ENCODE measurements at regions of chr17 and their contacts with region 1.

Region 1: GRCh38 chr17:12415031-12415430 is 250.7 kb upstream of the MYOCD start:
- DNase-seq: no peak
- H3K4me3 ChIP-seq: no peak overlapping the region
- H3K27ac ChIP-seq: peak overlapping the region; percentile 69 to 86 (median 82)
- H3K4me1 ChIP-seq: peaks cover 0 to 68% (median 27%) of the 10 kb centered on the region in 4 donors
- H3K27me3 ChIP-seq: no peaks in the 10 kb centered on the region
- CTCF ChIP-seq: no peak
- EP300 ChIP-seq: peak in 1 of 4 donors; percentile 36
- POLR2A ChIP-seq: no peak

Region 2: GRCh38 chr17:12277827-12278226 is 137.2 kb before region 1 on chr17:
- intact Hi-C with region 1: loop called (anchors 5 kb)
- DNase-seq: no peak
- H3K4me3 ChIP-seq: no peak overlapping the region
- H3K27ac ChIP-seq: peak overlapping the region in 3 of 4 donors; percentile 65 to 67 (median 66)
- H3K4me1 ChIP-seq: peaks cover 0 to 15% (median 0%) of the 10 kb centered on the region in 4 donors
- H3K27me3 ChIP-seq: no peaks in the 10 kb centered on the region
- CTCF ChIP-seq: no peak
- EP300 ChIP-seq: peak in 3 of 4 donors; percentile 18 to 57 (median 50)
- POLR2A ChIP-seq: no peak